Activated CD4-positive, alpha-beta T cell treated with anti-CD3 and anti-CD28 coated beads, Interleukin-2, amount 10 ng/mL, durations not matched to agents 24 days and 14 days (primary cell): ENCODE measurements at regions of chr3 and their contacts with region 1.

Region 1: GRCh38 chr3:31531992-31532586 is 636 bp upstream of the STT3B start:
- DNase-seq: peak; percentile 100
- H3K4me3 Mint-ChIP-seq: peak overlapping the region; percentile 95
- H3K27ac Mint-ChIP-seq: peak overlapping the region; percentile 99
- H3K4me1 Mint-ChIP-seq: peaks cover 19% of the 10 kb centered on the region
- H3K27me3 Mint-ChIP-seq: no peaks in the 10 kb centered on the region

Region 2: GRCh38 chr3:30768703-30769685 is 763.1 kb before region 1 on chr3:
- intact Hi-C with region 1: loop called (anchors 10 kb)
- DNase-seq: peak; percentile 90
- H3K4me3 Mint-ChIP-seq: no peak overlapping the region
- H3K27ac Mint-ChIP-seq: no peak overlapping the region
- H3K4me1 Mint-ChIP-seq: peaks cover 4% of the 10 kb centered on the region
- H3K27me3 Mint-ChIP-seq: peaks cover 25% of the 10 kb centered on the region

Region 3: DNA sequence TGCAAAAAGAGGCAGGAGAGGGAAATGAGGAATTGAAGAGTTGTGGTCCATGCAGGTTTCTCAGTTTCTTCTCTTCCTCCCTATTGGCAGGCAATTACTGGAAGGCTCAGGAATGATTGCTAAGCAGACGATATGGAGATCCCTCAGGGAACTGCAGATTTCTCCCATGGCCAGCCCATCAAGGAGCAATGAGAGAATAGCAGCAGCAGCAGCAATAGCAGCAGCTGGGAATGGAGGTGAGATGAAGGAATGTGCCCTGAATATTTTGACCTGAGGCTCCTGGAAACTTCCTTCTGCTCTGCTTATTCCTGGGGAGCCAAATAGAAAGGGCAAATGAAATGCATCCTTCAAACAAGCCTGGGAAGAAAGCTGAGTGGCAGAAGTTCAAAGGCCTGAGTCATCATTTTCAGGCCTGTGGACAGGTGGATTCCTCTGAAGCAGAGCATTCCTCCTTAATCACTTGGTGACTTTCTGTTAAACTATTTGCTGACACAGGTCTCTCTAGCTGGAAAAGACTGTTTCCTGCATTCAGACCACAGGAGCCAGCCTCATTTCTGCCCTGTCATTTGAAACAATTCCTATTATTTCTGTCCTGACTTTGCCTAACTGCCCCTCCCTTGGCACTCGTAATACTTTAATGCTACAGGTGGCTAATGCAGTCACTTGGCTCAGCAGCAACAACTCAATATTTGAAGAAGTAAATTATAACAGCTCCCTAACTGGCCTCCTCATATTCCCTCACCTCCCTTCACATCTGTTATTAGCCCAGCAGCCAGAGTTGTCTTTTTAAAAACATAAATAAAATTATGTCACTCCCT is 490.7 kb before region 1 on chr3:
- intact Hi-C with region 1: no loop called
- DNase-seq: peak; percentile 36
- H3K4me3 Mint-ChIP-seq: no peak overlapping the region
- H3K27ac Mint-ChIP-seq: no peak overlapping the region
- H3K4me1 Mint-ChIP-seq: no peaks in the 10 kb centered on the region
- H3K27me3 Mint-ChIP-seq: no peaks in the 10 kb centered on the region

Region 4: GRCh38 chr3:31213869-31214486 is 318.1 kb before region 1 on chr3:
- intact Hi-C with region 1: loop called (anchors 2 kb)
- DNase-seq: peak; percentile 86
- H3K4me3 Mint-ChIP-seq: peak overlapping the region; percentile 71
- H3K27ac Mint-ChIP-seq: peak overlapping the region; percentile 75
- H3K4me1 Mint-ChIP-seq: peaks cover 71% of the 10 kb centered on the region
- H3K27me3 Mint-ChIP-seq: no peaks in the 10 kb centered on the region

Region 5: DNA sequence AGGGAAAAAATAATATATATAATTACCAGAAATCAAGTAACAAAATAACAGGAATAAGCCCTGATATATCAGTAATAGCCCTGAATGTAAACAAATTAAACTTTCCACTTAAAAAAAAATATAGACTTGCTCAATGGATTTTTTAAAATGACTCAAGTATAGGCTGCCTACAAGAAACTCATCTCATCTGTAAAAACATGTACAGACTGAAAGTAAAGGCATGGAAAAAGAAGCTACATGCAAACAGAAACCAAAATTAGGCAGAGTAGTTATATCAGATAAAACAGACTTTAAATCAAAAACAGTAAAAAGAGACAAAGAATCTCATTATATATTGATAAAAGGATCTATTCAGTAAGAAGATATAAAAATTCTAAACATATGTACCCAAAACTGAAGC is 81.7 kb before region 1 on chr3:
- intact Hi-C with region 1: loop called (anchors 5 kb)
- DNase-seq: no peak
- H3K4me3 Mint-ChIP-seq: no peak overlapping the region
- H3K27ac Mint-ChIP-seq: no peak overlapping the region
- H3K4me1 Mint-ChIP-seq: peaks cover 9% of the 10 kb centered on the region
- H3K27me3 Mint-ChIP-seq: peaks cover 2% of the 10 kb centered on the region

Region 6: GRCh38 chr3:31634481-31634880 is 102.4 kb after region 1 on chr3:
- intact Hi-C with region 1: loop called (anchors 5 kb)
- DNase-seq: no peak
- H3K4me3 Mint-ChIP-seq: no peak overlapping the region
- H3K27ac Mint-ChIP-seq: peak overlapping the region; percentile 9
- H3K4me1 Mint-ChIP-seq: peaks cover 26% of the 10 kb centered on the region
- H3K27me3 Mint-ChIP-seq: no peaks in the 10 kb centered on the region

Region 7: GRCh38 chr3:32684800-32685542 is 1152.9 kb after region 1 on chr3 and contains the start of gene CNOT10:
- intact Hi-C with region 1: loop called (anchors 10 kb)
- DNase-seq: peak; percentile 99
- H3K4me3 Mint-ChIP-seq: peak within 1 kb of the TSS; percentile 95
- H3K27ac Mint-ChIP-seq: peak within 1 kb of the TSS; percentile 96
- H3K4me1 Mint-ChIP-seq: peaks cover 27% of the 10 kb centered on the region
- H3K27me3 Mint-ChIP-seq: no peaks in the 10 kb centered on the region
- total RNA-seq, gene CNOT10: 61.0 and 74.4 TPM in 2 replicates